Activated CD4-positive, alpha-beta T cell treated with anti-CD3 and anti-CD28 coated beads for 36 hours (primary cell): ENCODE measurements at regions of chr4 and their contacts with region 1.

Region 1: DNA sequence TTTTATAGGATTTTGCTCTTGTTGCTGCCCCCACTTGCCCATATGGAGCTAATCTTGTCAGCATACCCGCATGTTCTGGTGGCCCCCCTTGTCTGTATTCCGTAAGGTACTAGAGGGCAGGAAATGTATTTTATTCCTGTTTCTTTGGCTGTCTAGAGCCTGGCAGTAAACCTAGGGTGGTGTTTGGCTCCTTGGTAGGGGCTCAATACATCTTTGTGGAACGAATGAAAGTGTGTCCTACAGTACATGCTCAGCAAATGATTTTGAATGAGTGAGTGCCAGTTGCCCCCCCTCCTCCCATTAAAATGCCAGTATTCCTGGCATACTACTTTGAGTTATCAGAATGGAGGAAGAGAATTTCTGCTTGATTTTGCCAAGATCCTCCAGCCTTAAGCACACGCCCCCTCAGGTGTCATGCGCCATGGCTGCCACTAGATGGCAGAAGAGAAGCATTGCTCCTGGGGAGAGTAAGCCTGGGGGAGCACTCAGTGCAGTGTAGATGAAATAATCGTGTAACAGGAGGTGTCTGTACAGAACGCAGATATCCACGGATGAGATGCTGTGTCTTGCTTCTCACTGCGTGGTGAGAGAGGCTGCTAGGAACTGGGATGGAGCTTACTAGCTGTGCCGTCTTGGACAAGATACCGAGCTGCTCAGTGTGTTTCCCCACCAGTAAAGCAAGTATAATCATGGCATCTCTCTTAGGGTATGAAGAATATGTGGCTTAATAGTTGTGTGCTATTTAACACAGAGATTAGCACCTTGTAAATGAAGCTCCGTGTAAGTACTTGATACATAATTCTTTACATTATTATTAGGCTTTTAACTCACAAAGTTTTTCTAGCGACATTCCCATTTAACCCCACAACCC is 17.2 kb upstream of the RNF212 start:
- DNase-seq: peak; percentile 83
- ATAC-seq: peak; percentile 99
- H3K4me3 Mint-ChIP-seq: no peak overlapping the region
- H3K27ac Mint-ChIP-seq: no peak overlapping the region
- H3K4me1 Mint-ChIP-seq: no peaks in the 10 kb centered on the region
- H3K27me3 Mint-ChIP-seq: peaks cover 2% of the 10 kb centered on the region

Region 2: DNA sequence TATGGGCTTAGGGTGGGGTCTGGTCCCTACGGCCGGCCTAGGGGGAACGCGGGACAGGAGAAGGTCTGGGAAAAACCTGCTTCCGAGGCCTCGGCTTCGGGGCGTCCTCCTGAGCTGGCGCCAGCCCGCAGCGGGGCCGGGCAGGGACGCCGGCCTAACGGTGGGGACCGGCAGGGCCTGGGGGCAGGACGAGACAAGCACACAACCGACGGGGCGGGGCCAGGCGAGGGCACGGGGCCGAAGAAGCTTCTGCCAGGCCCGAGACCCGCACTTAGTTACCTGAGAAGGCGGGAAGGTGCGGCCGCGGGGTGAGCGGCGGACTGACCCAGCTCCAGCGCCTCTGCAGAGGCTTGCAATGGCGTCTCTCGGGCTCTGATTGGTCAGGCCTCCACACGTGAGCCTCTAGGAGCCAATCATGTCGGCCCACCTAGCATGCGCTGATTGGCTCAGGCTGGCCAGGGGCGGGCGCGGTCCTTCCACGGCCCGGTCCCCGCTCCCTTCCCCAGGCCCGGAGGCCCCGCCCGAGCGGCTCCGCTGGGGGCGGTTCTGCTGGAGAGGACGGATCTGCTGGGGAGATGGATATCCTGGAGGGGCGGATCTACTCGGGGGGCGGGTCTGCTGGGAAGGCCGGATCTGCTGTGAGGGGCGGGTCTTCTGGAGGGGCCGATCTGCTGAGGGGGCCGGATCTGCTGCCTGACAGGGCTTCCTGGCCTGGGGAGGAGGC is 348.9 kb before region 1 on chr4:
- CTCF ChIA-PET with region 1: no interaction called
- POLR2A ChIA-PET with region 1: no interaction called
- intact Hi-C with region 1: no loop called
- DNase-seq: peak; percentile 99
- ATAC-seq: peak; percentile 96
- H3K4me3 Mint-ChIP-seq: peak overlapping the region; percentile 82
- H3K27ac Mint-ChIP-seq: peak overlapping the region; percentile 93
- H3K4me1 Mint-ChIP-seq: peaks cover 50% of the 10 kb centered on the region
- H3K27me3 Mint-ChIP-seq: peaks cover 15% of the 10 kb centered on the region

Region 3: DNA sequence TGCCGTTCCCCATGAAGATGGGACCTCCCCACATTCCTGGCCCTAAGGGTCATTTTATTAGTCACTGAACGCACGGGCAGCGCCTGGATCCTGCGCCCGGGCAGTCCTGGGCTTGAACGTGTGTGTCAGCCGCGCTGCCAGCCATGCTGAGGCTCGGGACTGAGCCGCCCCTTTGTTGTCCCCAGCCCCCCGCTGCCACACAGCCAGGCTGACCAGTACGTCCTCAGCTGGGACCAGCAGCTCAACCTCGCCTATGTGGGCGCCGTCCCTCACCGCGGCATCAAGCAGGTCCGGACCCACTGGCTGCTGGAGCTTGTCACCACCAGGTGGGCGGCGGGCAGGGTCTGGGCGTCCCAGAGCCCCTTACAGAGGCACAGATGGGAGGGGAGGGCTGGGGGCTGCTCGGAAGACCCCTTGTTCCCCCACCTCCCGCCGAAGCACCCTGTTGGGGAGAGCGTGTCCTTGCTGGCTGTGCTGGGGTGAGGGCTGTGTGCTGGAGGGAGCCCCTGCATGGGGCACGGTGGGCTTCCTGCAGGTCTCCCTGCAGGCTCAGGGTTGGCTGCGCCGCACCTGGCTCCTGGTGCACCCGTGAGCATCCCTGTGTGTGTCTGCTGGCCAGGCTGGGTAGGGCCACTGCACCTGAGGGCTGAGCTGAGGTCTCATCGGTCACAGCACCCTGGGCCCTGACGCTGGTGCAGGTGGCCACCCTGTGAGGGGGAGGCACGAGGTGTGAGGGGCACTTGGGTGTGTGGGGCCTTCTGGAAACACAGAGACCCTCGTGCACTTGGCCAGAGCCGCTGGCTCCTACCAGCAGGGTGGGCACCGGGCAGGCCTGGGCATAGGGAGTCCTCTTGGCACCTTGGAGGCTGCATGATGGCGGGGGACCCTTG is 142.7 kb before region 1 on chr4:
- CTCF ChIA-PET with region 1: no interaction called
- POLR2A ChIA-PET with region 1: no interaction called
- intact Hi-C with region 1: no loop called
- DNase-seq: no peak
- ATAC-seq: no peak
- H3K4me3 Mint-ChIP-seq: peak overlapping the region; percentile 74
- H3K27ac Mint-ChIP-seq: no peak overlapping the region
- H3K4me1 Mint-ChIP-seq: peaks cover 13% of the 10 kb centered on the region
- H3K27me3 Mint-ChIP-seq: no peaks in the 10 kb centered on the region

Region 4: DNA sequence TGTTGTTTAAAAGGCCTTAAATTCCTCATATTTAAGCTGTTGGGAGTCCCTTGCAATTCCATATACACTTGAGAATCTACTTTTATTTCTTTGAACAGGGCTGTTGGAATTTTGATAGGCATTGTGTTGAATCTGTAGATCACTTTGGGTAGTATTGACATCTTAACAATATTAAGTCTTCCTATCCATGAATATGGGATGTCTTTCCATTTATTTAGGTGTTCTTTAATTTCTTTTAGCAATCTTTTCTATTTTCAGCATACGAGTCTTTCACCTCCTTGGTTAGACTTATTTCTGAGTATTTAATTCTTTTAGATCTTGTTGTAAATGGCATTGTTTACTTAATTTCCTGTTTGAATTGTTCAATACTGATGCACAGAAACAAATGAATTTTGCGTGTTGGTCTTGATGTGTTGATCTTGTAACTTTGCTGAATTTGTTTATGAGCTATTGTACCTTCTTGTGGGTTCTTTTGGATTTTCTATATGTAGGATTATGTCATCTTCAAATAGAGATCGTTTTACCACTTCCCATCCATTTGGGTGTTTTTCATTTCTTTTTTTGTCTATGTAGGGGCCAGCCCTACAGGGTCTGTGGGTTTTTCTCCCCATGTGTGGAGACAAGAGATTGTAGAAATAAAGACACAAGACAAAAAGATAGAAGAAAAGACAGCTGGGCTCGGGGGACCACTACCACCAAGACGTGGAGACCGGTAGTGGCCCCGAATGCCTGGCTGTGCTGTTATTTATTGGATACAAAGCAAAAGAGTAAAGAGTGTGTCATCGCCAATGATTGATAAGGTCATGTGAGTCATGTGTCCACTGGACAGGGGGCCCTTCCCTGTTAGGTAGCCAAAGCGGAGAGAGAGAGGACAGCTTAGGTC is 136.6 kb after region 1 on chr4:
- CTCF ChIA-PET with region 1: interaction called, 9 read pairs
- POLR2A ChIA-PET with region 1: no interaction called
- intact Hi-C with region 1: loop called (anchors 1 kb)
- DNase-seq: peak; percentile 29
- ATAC-seq: peak; percentile 71
- H3K4me3 Mint-ChIP-seq: peak overlapping the region; percentile 63
- H3K27ac Mint-ChIP-seq: peak overlapping the region; percentile 90
- H3K4me1 Mint-ChIP-seq: peaks cover 13% of the 10 kb centered on the region
- H3K27me3 Mint-ChIP-seq: no peaks in the 10 kb centered on the region

Region 5: GRCh38 chr4:1512738-1513660 is 382.4 kb after region 1 on chr4:
- CTCF ChIA-PET with region 1: no interaction called
- POLR2A ChIA-PET with region 1: no interaction called
- intact Hi-C with region 1: loop called in 1 of 2 experiments (anchors 2 kb)
- DNase-seq: peak; percentile 75
- ATAC-seq: peak; percentile 68
- H3K4me3 Mint-ChIP-seq: no peak overlapping the region
- H3K27ac Mint-ChIP-seq: no peak overlapping the region
- H3K4me1 Mint-ChIP-seq: no peaks in the 10 kb centered on the region
- H3K27me3 Mint-ChIP-seq: peaks cover 7% of the 10 kb centered on the region

Region 6: GRCh38 chr4:1628892-1629698 is 498.5 kb after region 1 on chr4:
- CTCF ChIA-PET with region 1: interaction called, 3 read pairs
- POLR2A ChIA-PET with region 1: no interaction called
- intact Hi-C with region 1: loop called in 1 of 2 experiments (anchors 2 kb)
- DNase-seq: peak; percentile 82
- ATAC-seq: peak; percentile 90
- H3K4me3 Mint-ChIP-seq: no peak overlapping the region
- H3K27ac Mint-ChIP-seq: no peak overlapping the region
- H3K4me1 Mint-ChIP-seq: no peaks in the 10 kb centered on the region
- H3K27me3 Mint-ChIP-seq: no peaks in the 10 kb centered on the region